ENCODE measurements at regions of chr6 and their contacts with region 1.

Region 1: DNA sequence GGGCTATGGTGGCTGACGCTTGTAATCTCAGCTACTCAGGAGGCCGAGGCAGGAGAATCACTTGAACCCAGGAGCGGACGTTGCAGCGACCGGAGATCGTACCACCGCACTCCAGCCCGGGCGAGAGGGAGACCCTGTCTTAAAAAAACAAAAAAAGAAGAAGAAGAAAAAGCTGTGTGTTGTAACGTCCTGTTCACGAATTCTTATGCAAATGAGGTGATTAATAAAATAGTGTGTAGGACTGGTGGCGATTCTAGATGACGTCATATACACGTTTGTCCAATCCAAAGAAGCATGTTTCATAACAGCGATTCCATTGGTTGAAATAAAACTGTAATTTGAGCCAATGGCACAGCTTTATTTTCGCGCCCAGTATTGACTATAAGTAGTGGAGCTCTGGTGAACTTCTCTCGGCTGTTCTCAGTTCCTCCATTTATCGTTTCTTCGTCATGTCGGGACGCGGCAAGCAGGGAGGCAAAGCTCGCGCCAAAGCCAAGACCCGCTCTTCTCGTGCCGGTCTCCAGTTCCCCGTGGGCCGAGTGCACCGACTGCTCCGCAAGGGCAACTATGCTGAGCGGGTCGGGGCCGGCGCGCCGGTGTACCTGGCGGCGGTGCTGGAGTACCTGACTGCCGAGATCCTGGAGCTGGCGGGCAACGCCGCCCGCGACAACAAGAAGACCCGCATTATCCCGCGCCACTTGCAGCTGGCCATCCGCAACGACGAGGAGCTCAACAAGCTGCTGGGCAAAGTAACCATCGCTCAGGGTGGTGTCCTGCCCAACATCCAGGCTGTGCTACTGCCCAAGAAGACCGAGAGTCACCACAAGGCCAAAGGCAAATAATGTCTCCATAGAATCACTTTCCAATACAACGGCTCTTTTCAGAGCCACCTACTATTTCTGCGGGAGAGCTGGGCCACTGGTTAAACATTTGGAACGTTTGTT is 47.0 kb downstream of the OR2B2 start:
- DNase-seq: peak; percentile 85
- H3K4me3 Mint-ChIP-seq: peak overlapping the region; percentile 81
- H3K27ac Mint-ChIP-seq: peak overlapping the region; percentile 99
- H3K4me1 Mint-ChIP-seq: peaks cover 61% of the 10 kb centered on the region
- H3K27me3 Mint-ChIP-seq: peaks cover 4% of the 10 kb centered on the region

Region 2: DNA sequence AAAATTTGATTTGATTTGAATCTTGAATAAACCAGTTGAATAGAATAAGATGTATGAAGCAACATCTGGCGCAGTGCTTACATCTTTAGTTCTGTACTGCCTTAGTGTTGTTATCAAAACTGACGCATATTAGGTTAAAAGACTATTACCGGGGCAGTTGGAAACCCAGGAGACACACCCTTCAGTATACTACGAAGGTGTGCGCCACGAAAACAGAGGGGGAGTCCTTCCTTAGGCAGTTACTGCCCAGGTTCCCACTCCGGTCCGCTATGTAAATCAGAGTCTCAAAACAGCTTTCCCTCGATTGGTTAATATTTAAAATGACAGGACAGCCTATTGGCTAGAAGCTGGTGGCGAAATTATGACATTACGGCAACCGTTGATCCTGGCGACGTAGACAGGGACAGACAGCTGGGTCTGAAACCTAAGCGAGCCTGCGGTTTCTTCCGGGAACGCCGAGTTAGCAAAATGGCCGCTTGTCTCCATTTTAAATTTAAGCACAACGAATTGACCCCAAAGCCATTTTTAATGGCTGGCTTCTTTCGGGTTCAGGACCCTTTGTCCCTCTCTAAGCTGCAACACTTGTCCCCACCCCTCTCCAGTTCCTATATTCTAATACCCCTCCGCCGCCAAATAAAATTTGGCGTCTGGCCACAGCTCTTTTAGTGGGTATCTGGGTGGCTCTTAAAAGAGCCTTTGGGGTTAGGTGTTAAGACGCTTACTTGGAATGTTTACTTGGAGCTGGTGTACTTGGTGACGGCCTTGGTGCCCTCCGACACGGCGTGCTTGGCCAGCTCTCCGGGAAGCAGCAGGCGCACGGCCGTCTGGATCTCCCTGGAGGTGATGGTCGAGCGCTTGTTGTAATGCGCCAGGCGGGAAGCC is 1742.1 kb before region 1 on chr6:
- CTCF ChIA-PET with region 1: no interaction called
- POLR2A ChIA-PET with region 1: interaction called, 97 read pairs
- DNase-seq: peak; percentile 95
- H3K4me3 Mint-ChIP-seq: peak overlapping the region; percentile 97
- H3K27ac Mint-ChIP-seq: peak overlapping the region; percentile 100
- H3K4me1 Mint-ChIP-seq: peaks cover 40% of the 10 kb centered on the region
- H3K27me3 Mint-ChIP-seq: no peaks in the 10 kb centered on the region

Region 3: DNA sequence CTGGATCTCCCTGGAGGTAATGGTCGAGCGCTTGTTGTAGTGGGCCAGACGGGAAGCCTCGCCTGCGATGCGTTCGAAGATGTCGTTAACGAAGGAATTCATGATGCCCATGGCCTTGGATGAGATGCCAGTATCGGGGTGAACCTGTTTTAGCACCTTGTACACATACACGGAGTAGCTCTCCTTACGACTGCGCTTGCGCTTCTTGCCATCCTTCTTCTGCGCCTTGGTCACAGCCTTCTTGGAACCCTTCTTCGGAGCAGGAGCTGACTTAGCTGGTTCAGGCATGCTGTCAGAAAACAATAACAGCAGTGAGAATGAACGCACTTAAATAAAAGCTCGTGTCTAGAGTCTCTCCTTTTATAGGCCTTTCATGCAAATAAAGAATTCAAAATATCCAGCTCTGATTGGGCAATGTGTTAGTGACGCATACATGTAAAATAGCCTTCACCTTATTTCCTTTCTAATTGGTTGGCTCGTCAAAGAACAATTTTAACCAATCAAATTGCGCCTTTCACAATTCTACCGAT is 1648.8 kb before region 1 on chr6:
- CTCF ChIA-PET with region 1: no interaction called
- POLR2A ChIA-PET with region 1: interaction called, 25 read pairs
- DNase-seq: peak; percentile 90
- H3K4me3 Mint-ChIP-seq: no peak overlapping the region
- H3K27ac Mint-ChIP-seq: no peak overlapping the region
- H3K4me1 Mint-ChIP-seq: peaks cover 28% of the 10 kb centered on the region
- H3K27me3 Mint-ChIP-seq: no peaks in the 10 kb centered on the region

Region 4: GRCh38 chr6:27132532-27133280 is 732.5 kb before region 1 on chr6:
- CTCF ChIA-PET with region 1: no interaction called
- POLR2A ChIA-PET with region 1: interaction called, 236 read pairs
- DNase-seq: peak; percentile 95
- H3K4me3 Mint-ChIP-seq: no peak overlapping the region
- H3K27ac Mint-ChIP-seq: no peak overlapping the region
- H3K4me1 Mint-ChIP-seq: peaks cover 60% of the 10 kb centered on the region
- H3K27me3 Mint-ChIP-seq: no peaks in the 10 kb centered on the region

Region 5: DNA sequence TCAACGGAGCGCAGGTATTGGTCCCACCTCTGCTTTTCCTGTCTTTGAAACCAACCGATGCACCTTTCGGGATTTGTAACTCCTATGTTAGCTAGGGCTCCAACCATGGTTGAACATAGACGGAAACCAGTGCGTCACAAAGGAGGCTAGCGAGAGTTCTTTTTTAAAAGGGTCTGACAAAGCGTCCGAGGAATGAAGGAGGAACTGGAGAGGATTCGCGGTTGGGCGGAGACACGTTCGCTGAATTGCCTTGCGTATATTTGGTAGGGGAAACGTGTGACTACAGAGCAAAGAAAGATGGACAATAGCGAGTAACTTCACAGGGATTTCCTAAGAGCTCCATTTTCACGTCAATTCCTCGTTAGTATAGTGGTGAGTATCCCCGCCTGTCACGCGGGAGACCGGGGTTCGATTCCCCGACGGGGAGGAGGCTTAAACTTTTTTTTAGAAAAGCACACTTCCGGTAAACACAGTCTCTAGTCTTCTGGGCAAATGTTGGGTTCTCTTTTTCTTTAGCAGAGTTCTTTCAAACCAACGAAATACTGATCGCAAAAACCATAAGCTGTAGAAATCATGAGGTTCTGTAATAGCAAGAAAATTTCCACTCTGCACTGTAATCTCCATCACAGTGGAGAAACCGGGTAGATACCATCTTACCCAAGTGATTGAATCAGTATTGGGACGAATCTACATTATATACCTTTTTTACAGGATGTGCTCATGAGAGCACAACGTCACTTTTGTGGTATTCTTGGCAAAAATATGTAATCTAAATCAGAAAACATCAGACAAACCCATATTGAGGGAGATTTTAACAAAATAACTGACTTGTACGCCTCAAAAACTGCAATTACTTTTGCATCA is 385.6 kb before region 1 on chr6:
- CTCF ChIA-PET with region 1: no interaction called
- POLR2A ChIA-PET with region 1: interaction called, 10 read pairs
- DNase-seq: peak; percentile 86
- H3K4me3 Mint-ChIP-seq: no peak overlapping the region
- H3K27ac Mint-ChIP-seq: no peak overlapping the region
- H3K4me1 Mint-ChIP-seq: peaks cover 10% of the 10 kb centered on the region
- H3K27me3 Mint-ChIP-seq: peaks cover 4% of the 10 kb centered on the region

Region 6: DNA sequence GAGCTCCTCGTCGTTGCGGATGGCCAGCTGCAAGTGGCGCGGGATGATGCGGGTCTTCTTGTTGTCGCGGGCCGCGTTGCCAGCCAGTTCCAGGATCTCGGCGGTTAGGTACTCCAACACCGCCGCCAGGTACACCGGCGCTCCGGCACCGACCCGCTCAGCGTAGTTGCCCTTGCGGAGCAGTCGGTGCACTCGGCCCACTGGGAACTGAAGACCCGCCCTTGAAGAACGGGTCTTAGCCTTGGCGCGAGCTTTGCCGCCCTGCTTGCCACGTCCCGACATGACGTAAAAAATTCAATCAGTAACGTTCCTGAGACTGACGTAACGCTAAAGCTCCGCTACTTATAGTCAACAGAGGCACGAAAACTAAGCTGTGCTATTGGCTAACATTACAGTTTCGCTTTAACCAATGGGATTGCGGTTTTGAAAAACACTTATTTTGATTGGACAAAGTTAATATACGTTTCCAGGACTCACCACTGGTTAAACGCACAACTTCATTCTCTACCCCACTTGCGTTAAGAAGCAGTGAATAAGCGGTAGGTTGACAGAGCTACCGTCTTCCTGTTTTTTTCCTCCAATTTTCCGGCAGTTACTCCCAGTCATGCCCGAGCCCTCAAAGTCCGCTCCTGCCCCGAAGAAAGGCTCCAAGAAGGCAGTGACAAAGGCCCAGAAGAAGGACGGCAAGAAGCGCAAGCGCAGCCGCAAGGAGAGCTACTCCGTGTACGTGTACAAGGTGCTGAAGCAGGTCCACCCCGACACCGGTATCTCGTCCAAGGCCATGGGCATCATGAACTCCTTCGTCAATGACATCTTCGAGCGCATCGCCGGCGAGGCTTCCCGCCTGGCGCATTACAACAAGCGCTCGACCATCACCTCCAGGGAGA is 26.9 kb before region 1 on chr6:
- CTCF ChIA-PET with region 1: interaction called, 166 read pairs
- POLR2A ChIA-PET with region 1: interaction called, 2,396 read pairs
- DNase-seq: peak; percentile 90
- H3K4me3 Mint-ChIP-seq: no peak overlapping the region
- H3K27ac Mint-ChIP-seq: no peak overlapping the region
- H3K4me1 Mint-ChIP-seq: peaks cover 31% of the 10 kb centered on the region
- H3K27me3 Mint-ChIP-seq: no peaks in the 10 kb centered on the region

Region 7: GRCh38 chr6:28880894-28881780 is 1016.0 kb after region 1 on chr6:
- CTCF ChIA-PET with region 1: no interaction called
- POLR2A ChIA-PET with region 1: interaction called, 10 read pairs
- DNase-seq: peak; percentile 57
- H3K4me3 Mint-ChIP-seq: peak overlapping the region; percentile 53
- H3K27ac Mint-ChIP-seq: peak overlapping the region; percentile 29
- H3K4me1 Mint-ChIP-seq: peaks cover 35% of the 10 kb centered on the region
- H3K27me3 Mint-ChIP-seq: peaks cover 43% of the 10 kb centered on the region